ENCODE measurements at regions of chr5 and their contacts with region 1.

Region 1: DNA sequence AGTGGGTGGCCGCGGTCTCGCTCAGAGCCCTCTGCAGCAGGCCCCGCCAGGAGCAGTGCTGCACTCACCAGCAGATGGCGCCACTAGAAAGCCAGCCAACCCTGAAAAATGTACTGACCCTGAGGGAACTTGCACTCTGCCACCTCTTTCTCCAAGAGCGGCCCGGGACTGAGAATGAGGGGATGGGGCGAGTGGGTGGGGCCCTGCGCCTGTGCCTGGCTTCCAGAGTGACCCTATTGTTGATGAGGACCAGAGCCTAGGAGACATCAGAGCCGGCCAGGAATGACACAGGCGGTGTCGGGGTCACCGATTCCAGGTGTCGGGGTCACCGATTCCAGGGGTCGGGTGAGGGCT is 2.9 kb upstream of the IL17B start:
- DNase-seq: peak; percentile 82
- ATAC-seq: peak; percentile 87
- H3K4me3 ChIP-seq: no peak overlapping the region
- H3K27ac ChIP-seq: peak overlapping the region; percentile 58
- H3K4me1 ChIP-seq: peaks cover 35% of the 10 kb centered on the region
- H3K27me3 ChIP-seq: no peaks in the 10 kb centered on the region
- CTCF ChIP-seq: peak; percentile 96

Region 2: GRCh38 chr5:149434162-149435014 is 52.4 kb after region 1 on chr5:
- intact Hi-C with region 1: loop called (anchors 5 kb)
- DNase-seq: no peak
- ATAC-seq: peak; percentile 67
- H3K4me3 ChIP-seq: no peak overlapping the region
- H3K27ac ChIP-seq: peak overlapping the region; percentile 11
- H3K4me1 ChIP-seq: peaks cover 12% of the 10 kb centered on the region
- H3K27me3 ChIP-seq: no peaks in the 10 kb centered on the region
- CTCF ChIP-seq: peak; percentile 89

Region 3: DNA sequence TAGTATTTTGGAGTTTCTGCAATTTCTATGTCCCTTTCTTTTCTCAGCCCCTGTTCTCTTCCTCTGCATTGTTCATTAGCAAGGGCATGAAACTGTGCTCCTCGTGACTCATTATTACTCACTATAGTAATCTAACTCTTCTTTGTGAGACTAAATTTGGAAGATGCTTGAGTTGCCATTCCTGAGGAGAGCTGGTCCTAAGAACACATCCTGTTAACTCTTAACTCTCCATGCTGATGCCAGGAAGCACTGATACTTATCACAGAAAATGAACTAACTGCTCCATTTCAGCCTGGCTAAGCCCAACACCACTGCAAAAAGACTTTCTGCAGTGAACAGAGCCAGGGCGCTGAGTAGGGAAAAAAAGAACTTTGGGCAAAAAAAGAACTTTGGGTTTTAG is 179.9 kb after region 1 on chr5:
- intact Hi-C with region 1: loop called (anchors 5 kb)
- DNase-seq: no peak
- ATAC-seq: peak; percentile 76
- H3K4me3 ChIP-seq: no peak overlapping the region
- H3K27ac ChIP-seq: peak overlapping the region; percentile 73
- H3K4me1 ChIP-seq: peaks cover 28% of the 10 kb centered on the region
- H3K27me3 ChIP-seq: no peaks in the 10 kb centered on the region
- CTCF ChIP-seq: no peak

Measured in upper lobe of right lung (tissue), 1 donor.